MCF 10A (cell line): ENCODE measurements at regions of chr16 and their contacts with region 1.

Region 1: GRCh38 chr16:22374311-22375116 is at the start of gene CDR2:
- DNase-seq: peak; percentile 98
- H3K4me3 Mint-ChIP-seq: peak within 1 kb of the TSS; percentile 99
- H3K27ac Mint-ChIP-seq: peak within 1 kb of the TSS; percentile 80
- H3K4me1 Mint-ChIP-seq: peaks cover 26% of the 10 kb centered on the region
- H3K27me3 Mint-ChIP-seq: no peaks in the 10 kb centered on the region
- CTCF ChIP-seq: no peak
- total RNA-seq, gene CDR2: 20.0 and 23.9 TPM in 2 replicates

Region 2: DNA sequence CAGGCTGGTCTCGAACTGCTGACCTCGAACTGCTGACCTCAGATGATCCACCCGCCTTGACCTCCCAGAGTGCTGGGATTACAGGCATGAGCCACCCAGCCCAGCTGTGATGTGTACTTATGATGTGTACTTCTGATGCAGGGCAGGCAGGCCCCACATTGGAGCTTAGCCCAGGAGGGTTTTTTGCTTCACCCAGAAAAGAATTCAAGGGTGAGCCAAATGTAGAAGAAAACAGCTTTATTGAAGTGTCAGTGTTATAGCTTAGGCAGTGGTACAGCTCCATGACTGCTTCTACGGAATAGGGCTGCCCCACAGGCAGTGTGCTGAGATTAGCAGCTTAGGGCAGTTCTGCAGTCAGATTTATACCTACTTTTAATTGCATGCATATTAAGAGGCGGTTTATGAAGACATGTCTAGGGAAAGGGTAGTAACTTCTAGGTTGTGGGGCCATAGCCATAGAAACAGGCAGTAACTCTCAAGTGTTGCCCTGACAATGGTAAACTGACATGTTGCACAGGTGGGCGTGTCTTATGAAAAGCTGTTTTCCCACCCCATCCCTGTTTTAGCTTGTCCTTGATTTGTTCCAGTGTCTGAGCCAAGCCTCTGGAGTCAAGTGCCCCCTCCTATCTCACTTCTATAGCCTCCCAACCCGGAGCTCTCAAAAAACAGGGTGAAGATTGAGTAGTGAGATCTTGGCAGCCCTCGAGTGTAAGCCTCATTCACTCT is 101.5 kb before region 1 on chr16:
- CTCF ChIA-PET with region 1: no interaction called
- POLR2A ChIA-PET with region 1: no interaction called
- intact Hi-C with region 1: no loop called
- DNase-seq: no peak
- H3K4me3 Mint-ChIP-seq: no peak overlapping the region
- H3K27ac Mint-ChIP-seq: peak overlapping the region; percentile 73
- H3K4me1 Mint-ChIP-seq: peaks cover 4% of the 10 kb centered on the region
- H3K27me3 Mint-ChIP-seq: no peaks in the 10 kb centered on the region
- CTCF ChIP-seq: no peak

Region 3: DNA sequence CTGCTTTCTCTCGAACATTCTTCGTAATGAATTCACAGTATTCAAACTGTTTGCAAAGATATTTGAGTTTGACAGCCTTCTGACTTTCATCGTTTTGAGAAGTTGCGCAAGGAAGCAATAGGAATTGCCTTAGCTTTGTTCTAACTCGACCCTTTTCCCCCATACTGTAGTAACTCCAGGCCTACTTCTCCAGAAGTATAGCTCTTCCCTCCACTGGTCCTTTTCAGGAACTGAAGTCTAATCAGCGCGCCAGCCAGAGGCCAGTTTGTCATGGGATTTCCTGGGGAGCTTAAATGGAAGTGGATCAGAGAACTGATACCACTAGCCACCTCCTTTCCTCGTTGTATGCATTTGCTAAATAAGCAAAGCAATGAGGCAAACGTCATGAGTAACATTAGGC is 28.0 kb before region 1 on chr16:
- CTCF ChIA-PET with region 1: interaction called, 3 read pairs
- POLR2A ChIA-PET with region 1: interaction called, 14 read pairs
- intact Hi-C with region 1: no loop called
- DNase-seq: no peak
- H3K4me3 Mint-ChIP-seq: no peak overlapping the region
- H3K27ac Mint-ChIP-seq: no peak overlapping the region
- H3K4me1 Mint-ChIP-seq: peaks cover 10% of the 10 kb centered on the region
- H3K27me3 Mint-ChIP-seq: no peaks in the 10 kb centered on the region
- CTCF ChIP-seq: no peak

Region 4: DNA sequence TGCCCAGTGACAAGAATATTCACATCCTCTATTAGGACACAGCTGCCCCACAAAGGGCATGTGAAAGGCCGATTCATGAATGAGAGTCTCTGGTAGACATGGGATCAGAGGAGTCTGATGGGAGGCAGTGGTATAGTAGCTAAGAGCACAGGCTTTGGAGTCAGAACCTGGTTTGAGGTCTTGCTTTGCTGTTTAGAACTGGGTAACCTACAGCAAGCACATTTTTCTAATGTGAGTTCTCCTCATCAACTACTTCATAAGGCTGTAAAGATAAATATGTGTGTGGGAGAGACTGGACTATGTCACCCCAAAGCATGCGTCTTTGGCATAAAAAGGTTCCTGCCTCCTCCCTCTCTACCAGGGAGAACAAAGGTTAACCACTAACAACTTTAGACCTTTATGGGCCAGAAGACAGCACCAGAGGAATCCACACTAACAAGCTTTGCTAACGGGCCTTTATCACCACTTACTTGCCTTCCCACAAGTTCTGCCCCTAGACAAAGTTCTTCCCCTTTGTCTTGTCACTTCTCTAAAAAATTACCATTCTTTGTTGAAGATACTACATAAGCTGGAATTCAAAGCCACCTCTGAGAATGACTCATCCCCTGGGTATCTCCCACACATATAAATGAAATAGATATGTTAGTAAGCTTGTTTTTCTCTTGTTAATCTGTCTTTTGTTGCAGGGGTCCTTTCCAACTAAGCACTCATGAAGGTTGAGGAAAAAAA is 21.2 kb before region 1 on chr16:
- CTCF ChIA-PET with region 1: no interaction called
- POLR2A ChIA-PET with region 1: interaction called, 24 read pairs
- intact Hi-C with region 1: no loop called
- DNase-seq: peak; percentile 44
- H3K4me3 Mint-ChIP-seq: no peak overlapping the region
- H3K27ac Mint-ChIP-seq: no peak overlapping the region
- H3K4me1 Mint-ChIP-seq: peaks cover 31% of the 10 kb centered on the region
- H3K27me3 Mint-ChIP-seq: no peaks in the 10 kb centered on the region
- CTCF ChIP-seq: no peak

Region 5: GRCh38 chr16:22360963-22361659 is 13.4 kb before region 1 on chr16:
- CTCF ChIA-PET with region 1: no interaction called
- POLR2A ChIA-PET with region 1: interaction called, 19 read pairs
- intact Hi-C with region 1: no loop called
- DNase-seq: no peak
- H3K4me3 Mint-ChIP-seq: no peak overlapping the region
- H3K27ac Mint-ChIP-seq: no peak overlapping the region
- H3K4me1 Mint-ChIP-seq: peaks cover 2% of the 10 kb centered on the region
- H3K27me3 Mint-ChIP-seq: no peaks in the 10 kb centered on the region
- CTCF ChIP-seq: no peak

Region 6: DNA sequence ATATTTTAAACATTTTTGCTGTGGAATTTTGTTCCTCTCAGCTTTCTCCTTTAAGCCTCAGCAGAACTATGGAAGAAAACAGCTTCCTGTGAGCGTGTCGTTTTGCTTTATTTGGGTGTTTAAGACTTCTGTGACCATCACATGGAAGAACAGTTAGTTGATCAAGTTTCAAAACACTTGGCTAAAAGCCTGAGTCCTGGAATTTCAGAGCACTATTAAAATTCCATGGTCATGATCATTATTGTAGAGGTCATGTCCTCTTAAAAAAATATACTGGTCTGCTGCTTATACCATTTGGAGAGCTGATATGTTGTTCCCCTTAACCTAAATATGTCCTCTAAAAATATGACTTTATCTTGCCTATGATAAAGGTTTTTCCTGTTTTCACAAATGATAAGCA is 12.5 kb after region 1 on chr16:
- CTCF ChIA-PET with region 1: no interaction called
- POLR2A ChIA-PET with region 1: interaction called, 11 read pairs
- intact Hi-C with region 1: no loop called
- DNase-seq: peak; percentile 67
- H3K4me3 Mint-ChIP-seq: no peak overlapping the region
- H3K27ac Mint-ChIP-seq: no peak overlapping the region
- H3K4me1 Mint-ChIP-seq: peaks cover 4% of the 10 kb centered on the region
- H3K27me3 Mint-ChIP-seq: no peaks in the 10 kb centered on the region
- CTCF ChIP-seq: no peak

Region 7: GRCh38 chr16:22397464-22397863 is 22.9 kb after region 1 on chr16:
- CTCF ChIA-PET with region 1: interaction called, 4 read pairs
- POLR2A ChIA-PET with region 1: interaction called, 10 read pairs
- intact Hi-C with region 1: no loop called
- DNase-seq: peak; percentile 84
- H3K4me3 Mint-ChIP-seq: no peak overlapping the region
- H3K27ac Mint-ChIP-seq: peak overlapping the region; percentile 13
- H3K4me1 Mint-ChIP-seq: peaks cover 34% of the 10 kb centered on the region
- H3K27me3 Mint-ChIP-seq: no peaks in the 10 kb centered on the region
- CTCF ChIP-seq: no peak

Region 8: GRCh38 chr16:23048159-23048558 is 673.6 kb after region 1 on chr16:
- CTCF ChIA-PET with region 1: no interaction called
- POLR2A ChIA-PET with region 1: no interaction called
- intact Hi-C with region 1: no loop called
- DNase-seq: no peak
- H3K4me3 Mint-ChIP-seq: no peak overlapping the region
- H3K27ac Mint-ChIP-seq: no peak overlapping the region
- H3K4me1 Mint-ChIP-seq: no peaks in the 10 kb centered on the region
- H3K27me3 Mint-ChIP-seq: peaks cover 87% of the 10 kb centered on the region
- CTCF ChIP-seq: no peak